PC-3 (cell line): ENCODE measurements at regions of chr5 and their contacts with region 1.

Region 1: DNA sequence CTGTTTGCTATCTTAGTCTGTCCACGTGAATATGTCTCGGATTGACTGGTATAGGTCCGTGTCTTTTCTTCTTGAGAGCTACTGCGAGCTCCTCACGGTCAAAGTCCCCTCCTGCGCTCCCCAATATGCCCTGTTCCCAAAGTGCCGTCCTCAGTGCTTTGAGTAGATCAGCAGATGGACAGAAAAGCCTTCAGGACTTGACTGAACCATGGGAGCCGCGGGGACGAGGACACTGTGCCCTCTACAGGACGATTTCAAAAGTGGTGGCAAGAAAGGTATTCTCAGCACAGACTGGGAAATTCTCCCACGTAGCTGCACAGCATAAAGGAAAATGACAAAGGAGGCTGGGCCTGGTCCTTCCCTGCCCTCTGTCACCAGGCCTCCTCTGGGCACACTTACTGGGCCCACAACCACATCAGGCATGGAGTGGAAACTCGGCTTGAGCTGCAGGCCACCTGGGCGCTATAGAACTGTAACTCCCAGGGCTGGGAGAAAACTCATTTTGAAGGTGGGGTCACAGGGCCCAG is 16.6 kb upstream of the MTMR12 start:
- DNase-seq: peak; percentile 64
- ATAC-seq: peak; percentile 94
- H3K4me3 ChIP-seq: no peak overlapping the region
- H3K27ac ChIP-seq: no peak overlapping the region
- H3K4me1 ChIP-seq: 0 out of 2 replicates have a peak, but pooled peaks cover 7% of the 10 kb centered on the region
- H3K27me3 ChIP-seq: no peaks in the 10 kb centered on the region
- CTCF ChIP-seq: peak; percentile 85

Region 2: GRCh38 chr5:32098291-32098690 is 231.1 kb before region 1 on chr5:
- CTCF ChIA-PET with region 1: no interaction called
- POLR2A ChIA-PET with region 1: no interaction called
- intact Hi-C with region 1: loop called (anchors 5 kb)
- DNase-seq: no peak
- ATAC-seq: no peak
- H3K4me3 ChIP-seq: no peak overlapping the region
- H3K27ac ChIP-seq: no peak overlapping the region
- H3K4me1 ChIP-seq: no peaks in the 10 kb centered on the region
- H3K27me3 ChIP-seq: no peaks in the 10 kb centered on the region
- CTCF ChIP-seq: no peak

Region 3: DNA sequence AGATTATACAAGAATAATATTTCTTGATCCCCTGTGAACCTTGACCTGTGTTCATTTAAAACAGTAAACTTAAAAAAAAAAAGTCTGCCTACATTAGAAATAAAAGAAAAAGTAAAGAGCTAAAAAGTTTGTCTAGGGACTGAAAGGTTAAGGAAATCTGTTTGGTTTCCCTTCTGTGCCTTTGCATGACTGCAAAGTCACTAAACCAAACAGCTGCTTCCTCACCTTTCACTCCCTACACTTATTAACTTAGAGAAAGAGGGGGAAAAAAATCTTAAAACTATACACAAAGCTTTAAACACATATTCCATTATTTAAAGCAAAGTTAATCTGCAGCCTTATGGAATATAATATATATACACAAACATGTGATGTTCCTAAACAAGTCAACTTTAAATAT is 50.0 kb after region 1 on chr5:
- CTCF ChIA-PET with region 1: interaction called, 12 read pairs
- POLR2A ChIA-PET with region 1: no interaction called
- intact Hi-C with region 1: no loop called
- DNase-seq: no peak
- ATAC-seq: no peak
- H3K4me3 ChIP-seq: no peak overlapping the region
- H3K27ac ChIP-seq: no peak overlapping the region
- H3K4me1 ChIP-seq: no peaks in the 10 kb centered on the region
- H3K27me3 ChIP-seq: no peaks in the 10 kb centered on the region
- CTCF ChIP-seq: no peak

Region 4: DNA sequence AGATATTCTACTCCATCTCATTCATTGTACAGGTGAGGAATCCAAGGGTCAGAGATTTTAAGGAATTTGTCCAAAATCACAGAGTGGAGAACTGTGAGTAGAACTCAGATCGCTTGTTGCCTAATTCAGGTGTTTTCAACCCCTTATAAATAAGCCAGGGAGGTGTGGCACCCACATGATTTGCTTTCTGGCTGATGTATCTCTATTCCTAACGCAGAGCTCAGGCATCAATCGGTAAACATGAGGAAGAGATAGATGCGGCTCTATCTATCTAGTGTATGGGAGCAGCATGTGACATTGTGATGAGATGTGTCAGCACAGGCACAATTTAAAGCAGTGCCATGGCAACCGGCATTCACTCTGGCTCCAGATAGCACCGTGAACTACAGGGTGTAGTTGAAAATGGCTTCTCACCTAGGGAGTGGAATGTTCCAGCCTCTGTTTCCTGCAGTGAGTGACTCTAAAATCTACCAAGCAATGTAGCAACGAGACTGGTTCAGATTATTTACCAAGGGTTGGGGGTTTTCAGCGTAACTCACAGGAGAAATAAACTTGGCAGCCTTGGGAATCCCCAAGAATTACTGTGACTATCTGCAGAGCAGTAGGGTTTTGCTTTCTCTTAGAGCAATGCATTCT is 202.6 kb after region 1 on chr5:
- CTCF ChIA-PET with region 1: no interaction called
- POLR2A ChIA-PET with region 1: no interaction called
- intact Hi-C with region 1: no loop called
- DNase-seq: peak; percentile 57
- ATAC-seq: peak; percentile 97
- H3K4me3 ChIP-seq: peak overlapping the region; percentile 17; the same call in 1 of the 2 replicates
- H3K27ac ChIP-seq: no peak overlapping the region
- H3K4me1 ChIP-seq: peaks cover 14% of the 10 kb centered on the region
- H3K27me3 ChIP-seq: no peaks in the 10 kb centered on the region
- CTCF ChIP-seq: no peak

Region 5: GRCh38 chr5:32654427-32654826 is 325.1 kb after region 1 on chr5:
- CTCF ChIA-PET with region 1: no interaction called
- POLR2A ChIA-PET with region 1: no interaction called
- intact Hi-C with region 1: no loop called
- DNase-seq: no peak
- ATAC-seq: no peak
- H3K4me3 ChIP-seq: no peak overlapping the region
- H3K27ac ChIP-seq: no peak overlapping the region
- H3K4me1 ChIP-seq: no peaks in the 10 kb centered on the region
- H3K27me3 ChIP-seq: no peaks in the 10 kb centered on the region
- CTCF ChIP-seq: no peak